Sigmoid colon (tissue), 7 donors: ENCODE measurements at regions of chr10 and their contacts with region 1.

Region 1: DNA sequence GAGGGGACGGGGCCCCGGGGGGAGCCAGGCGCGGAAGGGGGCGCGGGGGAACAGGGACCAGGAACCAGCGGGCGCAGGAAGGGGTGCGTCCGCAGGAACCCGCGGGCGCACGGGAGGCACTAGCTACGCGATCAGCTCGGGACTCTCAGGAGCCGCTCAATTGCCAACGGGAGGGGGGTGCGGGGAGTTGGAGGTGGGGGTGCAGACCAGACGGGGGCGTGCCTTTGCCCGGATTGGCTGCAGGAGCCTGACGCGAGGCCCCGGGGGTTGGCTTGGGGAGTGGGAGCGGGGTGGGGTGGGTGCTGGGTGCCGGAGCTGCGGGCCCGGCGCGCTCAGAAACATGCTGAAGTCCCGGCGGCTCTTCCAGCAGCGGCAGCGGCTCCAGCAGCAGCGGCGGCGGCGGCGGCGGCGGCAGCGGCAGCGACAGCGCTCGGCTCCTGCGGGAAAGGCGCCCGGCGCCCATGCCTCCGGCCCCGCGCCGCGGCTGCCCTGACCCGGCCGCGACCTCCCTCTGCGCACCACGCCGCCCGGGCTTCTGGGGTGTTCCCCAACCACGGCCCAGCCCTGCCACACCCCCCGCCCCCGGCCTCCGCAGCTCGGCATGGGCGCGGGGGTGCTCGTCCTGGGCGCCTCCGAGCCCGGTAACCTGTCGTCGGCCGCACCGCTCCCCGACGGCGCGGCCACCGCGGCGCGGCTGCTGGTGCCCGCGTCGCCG is at the start of gene ADRB1:
- DNase-seq: peak; percentile 94
- H3K4me3 ChIP-seq: peak within 1 kb of the TSS; percentile 48 to 59 (median 58)
- H3K27ac ChIP-seq: peak within 1 kb of the TSS; percentile 86 to 93 (median 88)
- H3K4me1 ChIP-seq: peaks cover 0 to 28% (median 24%) of the 10 kb centered on the region in 4 donors
- H3K27me3 ChIP-seq: peaks cover 0 to 34% (median 17%) of the 10 kb centered on the region in 3 donors
- CTCF ChIP-seq: no peak
- EP300 ChIP-seq: no peak
- POLR2A ChIP-seq: peak; percentile 11 to 33
- total RNA-seq, gene ADRB1: 1.4 to 34.5 (median 3.2) TPM

Region 2: GRCh38 chr10:112898540-112899395 is 1144.9 kb before region 1 on chr10:
- intact Hi-C with region 1: no loop called
- DNase-seq: no peak
- H3K4me3 ChIP-seq: peak overlapping the region in 3 of 4 donors; percentile 2 to 25 (median 6)
- H3K27ac ChIP-seq: no peak overlapping the region
- H3K4me1 ChIP-seq: peaks cover 0 to 11% (median 7%) of the 10 kb centered on the region in 4 donors
- H3K27me3 ChIP-seq: no peaks in the 10 kb centered on the region
- CTCF ChIP-seq: no peak
- EP300 ChIP-seq: no peak
- POLR2A ChIP-seq: no peak

Region 3: DNA sequence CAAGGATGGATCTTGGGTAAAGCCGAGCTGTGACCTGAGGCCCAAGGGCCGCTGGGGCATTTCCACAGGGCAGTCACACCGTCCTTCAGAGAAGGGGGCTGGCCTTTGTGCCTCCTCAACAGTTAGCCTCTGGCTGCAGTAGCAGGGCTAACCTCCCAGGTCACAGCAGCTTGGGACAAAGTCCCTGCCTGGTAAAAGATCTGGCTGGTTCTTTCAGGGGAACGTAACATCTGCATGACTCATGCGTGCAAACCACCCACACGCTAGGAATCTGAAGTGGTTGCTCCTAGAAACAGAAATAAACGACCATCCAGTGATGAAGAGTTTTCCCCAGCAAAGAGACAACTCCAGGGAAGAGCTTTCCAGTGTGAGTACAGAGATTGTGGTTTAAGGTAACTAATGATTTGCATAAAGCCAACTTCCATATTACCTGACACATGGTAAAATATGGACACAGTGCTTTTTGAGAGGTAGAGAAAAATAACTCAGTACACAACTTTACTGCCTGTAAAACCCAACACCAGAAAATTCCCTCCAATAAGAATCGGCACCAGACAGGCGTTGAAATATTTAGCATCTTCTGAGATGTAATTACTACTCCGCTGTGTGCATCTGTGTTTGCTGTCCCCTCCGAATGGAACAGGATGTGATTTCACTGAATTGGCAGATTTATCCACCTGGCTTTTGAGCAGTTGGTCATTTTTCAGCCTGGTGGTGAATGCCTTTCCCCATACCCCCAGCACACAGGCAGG is 84.9 kb before region 1 on chr10:
- intact Hi-C with region 1: loop called (anchors 10 kb)
- DNase-seq: no peak
- H3K4me3 ChIP-seq: no peak overlapping the region
- H3K27ac ChIP-seq: peak overlapping the region; percentile 68 to 78 (median 72)
- H3K4me1 ChIP-seq: peaks cover 0 to 32% (median 25%) of the 10 kb centered on the region in 4 donors
- H3K27me3 ChIP-seq: no peaks in the 10 kb centered on the region
- CTCF ChIP-seq: no peak
- EP300 ChIP-seq: no peak
- POLR2A ChIP-seq: no peak

Region 4: DNA sequence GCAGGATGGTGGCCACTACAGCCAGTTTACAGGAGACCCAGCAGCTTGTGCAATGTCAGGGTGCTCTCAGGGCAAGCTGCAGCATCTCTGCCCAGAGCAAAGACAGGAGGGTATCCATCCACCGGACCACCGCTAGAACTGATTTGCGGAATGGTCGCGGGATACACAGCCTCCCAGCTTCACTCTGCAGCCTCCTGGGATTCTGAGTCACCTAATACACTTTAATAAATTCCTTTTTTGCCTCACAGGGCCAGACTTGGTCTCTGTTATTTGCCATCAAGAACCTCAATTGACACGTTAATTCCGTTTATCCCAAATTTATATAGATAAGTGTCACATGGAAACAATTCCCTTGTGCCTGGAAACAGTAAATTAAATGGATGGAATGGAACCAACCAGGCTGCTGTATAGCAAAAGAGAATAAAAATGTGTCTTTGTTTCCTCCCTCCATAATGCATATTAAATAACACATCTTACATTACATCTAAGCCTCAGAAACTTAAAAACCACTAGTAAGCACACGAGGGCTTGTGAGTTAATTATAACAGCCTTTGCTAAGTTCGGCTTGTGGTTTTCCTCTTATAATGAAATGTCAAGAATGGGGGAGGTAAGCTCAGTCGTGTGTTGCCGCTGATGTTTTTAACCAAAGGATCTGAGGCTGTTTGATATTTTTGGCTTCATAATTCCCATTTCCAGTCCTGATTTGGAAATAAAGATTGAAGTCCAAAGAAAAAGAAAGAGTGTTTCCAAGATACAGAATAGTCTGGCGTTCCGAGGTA is 52.1 kb after region 1 on chr10:
- intact Hi-C with region 1: loop called (anchors 5 kb)
- DNase-seq: no peak
- H3K4me3 ChIP-seq: no peak overlapping the region
- H3K27ac ChIP-seq: no peak overlapping the region
- H3K4me1 ChIP-seq: peaks cover 0 to 6% (median 4%) of the 10 kb centered on the region in 4 donors
- H3K27me3 ChIP-seq: peaks cover 0 to 8% (median 0%) of the 10 kb centered on the region in 3 donors
- CTCF ChIP-seq: no peak
- EP300 ChIP-seq: no peak
- POLR2A ChIP-seq: no peak